GM10248 (cell line): ENCODE measurements at regions of chr22 and their contacts with region 1.

Region 1: GRCh38 chr22:23849009-23850006 is 8.4 kb upstream of the SLC2A11 start:
- DNase-seq: peak; percentile 89
- CTCF ChIP-seq: peak; percentile 83

Region 2: GRCh38 chr22:23431337-23432072 is 417.8 kb before region 1 on chr22:
- CTCF ChIA-PET with region 1: no interaction called
- POLR2A ChIA-PET with region 1: no interaction called
- DNase-seq: no peak
- CTCF ChIP-seq: no peak

Region 3: GRCh38 chr22:23539135-23539838 is 310.0 kb before region 1 on chr22:
- CTCF ChIA-PET with region 1: interaction called, 10 read pairs
- POLR2A ChIA-PET with region 1: no interaction called
- DNase-seq: peak; percentile 74
- CTCF ChIP-seq: peak; percentile 97

Region 4: DNA sequence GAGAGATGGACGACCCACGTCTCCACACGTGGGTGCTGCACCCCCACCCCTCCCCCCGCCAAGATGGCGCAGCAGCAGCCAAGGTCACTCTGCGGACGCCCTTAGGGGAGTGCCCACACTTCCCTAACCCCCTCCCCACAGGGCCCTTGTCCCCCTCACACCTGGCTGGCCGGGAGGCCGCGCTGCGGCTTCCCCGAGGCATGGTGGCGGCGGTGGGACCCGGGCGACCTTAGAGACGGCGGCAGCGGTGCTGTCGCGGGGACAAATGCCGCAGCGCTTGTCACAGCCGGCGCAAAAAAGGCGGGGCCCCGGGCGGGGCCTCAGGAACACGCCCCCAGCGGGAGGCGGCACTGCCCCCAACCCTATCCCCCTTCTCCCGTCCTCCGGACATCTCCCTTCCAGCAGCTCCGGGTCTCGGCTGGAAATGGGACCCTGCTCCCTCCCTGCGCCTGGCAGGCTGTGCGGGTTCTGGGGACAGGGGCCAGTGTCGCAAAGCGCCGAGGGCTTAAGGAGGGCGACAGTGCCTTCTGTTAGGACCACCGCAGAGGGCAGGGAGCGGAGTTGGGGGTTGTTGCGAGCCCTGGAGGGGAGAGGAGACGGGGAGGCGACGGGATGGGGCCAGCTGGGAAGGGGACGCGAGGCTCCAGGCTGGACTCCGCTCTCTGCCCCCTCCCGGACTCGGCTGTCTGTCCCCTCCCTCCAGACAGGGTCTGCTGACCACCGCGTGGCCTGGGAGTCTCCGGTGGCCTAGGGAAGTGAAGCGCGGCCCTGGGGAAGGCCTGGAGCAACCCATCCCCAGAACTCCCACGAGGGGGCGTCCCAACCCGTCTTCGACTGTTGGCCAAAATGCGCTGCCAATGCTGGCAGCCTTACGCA is 81.4 kb before region 1 on chr22 and contains the start of gene CHCHD10:
- CTCF ChIA-PET with region 1: interaction called, 71 read pairs
- POLR2A ChIA-PET with region 1: no interaction called
- DNase-seq: peak; percentile 86
- CTCF ChIP-seq: peak; percentile 77

Region 5: GRCh38 chr22:23786752-23787599 is 62.3 kb before region 1 on chr22 and contains the start of gene SMARCB1:
- CTCF ChIA-PET with region 1: interaction called, 16 read pairs
- POLR2A ChIA-PET with region 1: interaction called, 4 read pairs
- DNase-seq: peak; percentile 94
- CTCF ChIP-seq: no peak

Region 6: DNA sequence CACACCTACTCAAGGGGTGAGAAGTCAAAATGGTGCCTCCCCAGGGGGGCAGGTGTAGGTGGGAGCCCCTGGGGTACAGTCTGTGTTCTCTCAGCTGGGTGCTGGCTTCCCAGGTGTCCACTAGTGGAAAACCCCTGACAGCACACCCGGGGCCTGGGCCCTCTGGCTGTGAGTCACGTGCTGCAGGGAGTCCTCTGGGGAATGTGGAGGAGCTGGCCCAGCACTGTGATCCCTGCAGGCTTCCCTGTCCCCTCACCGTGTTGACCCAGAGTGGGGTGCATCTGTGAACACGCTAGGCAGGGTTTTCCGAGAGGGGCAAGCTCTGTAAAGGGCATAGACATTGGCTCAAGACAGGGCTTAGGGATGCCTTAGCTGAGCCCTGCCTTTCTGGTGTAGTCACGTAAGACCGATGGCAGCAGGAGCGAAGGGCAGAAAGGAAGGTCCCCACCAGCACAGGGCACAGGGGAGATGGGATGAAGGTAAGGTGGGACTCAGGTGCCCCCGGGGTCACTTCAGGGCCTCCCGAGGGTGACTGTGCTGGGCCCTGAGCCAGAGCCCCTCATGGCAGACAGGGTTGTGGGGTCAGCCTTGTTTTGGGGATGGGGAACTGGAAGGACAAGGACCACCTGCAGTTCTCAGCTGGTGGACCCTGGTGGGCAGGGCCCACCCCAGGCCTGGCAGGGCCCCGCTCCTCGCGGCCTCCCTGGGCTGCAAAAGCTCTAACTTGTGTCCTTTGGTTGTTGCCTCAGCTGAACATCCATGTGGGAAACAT is 24.6 kb before region 1 on chr22:
- CTCF ChIA-PET with region 1: interaction called, 12 read pairs
- POLR2A ChIA-PET with region 1: no interaction called
- DNase-seq: no peak
- CTCF ChIP-seq: no peak

Region 7: GRCh38 chr22:23878219-23878618 is 28.9 kb after region 1 on chr22:
- CTCF ChIA-PET with region 1: interaction called, 16 read pairs
- POLR2A ChIA-PET with region 1: no interaction called
- DNase-seq: no peak
- CTCF ChIP-seq: no peak